Posterior vena cava (tissue), 2 donors: ENCODE measurements at regions of chr9 and their contacts with region 1.

Region 1: DNA sequence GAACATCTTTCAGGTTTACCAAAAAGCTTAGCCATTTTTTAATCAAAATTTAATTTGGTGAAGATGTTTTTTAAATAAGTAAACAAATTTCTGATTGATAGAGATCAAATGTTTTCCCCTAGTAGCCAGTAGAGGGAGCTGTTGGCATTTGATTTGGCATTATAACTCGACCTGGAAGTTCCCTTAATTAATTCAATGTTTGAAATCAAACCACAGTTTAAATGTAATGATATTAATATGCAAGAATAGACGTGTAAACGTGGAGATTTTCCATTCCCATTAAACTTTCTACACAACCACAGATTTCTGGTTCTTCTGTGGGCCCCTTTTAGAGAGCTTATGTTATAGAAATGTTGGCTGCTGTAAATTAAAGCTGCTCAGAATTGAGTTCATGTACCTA is 148.1 kb upstream of the MPDZ start:
- DNase-seq: no peak

Region 2: GRCh38 chr9:12274577-12274976 is 1153.0 kb before region 1 on chr9:
- intact Hi-C with region 1: no loop called
- DNase-seq: peak; percentile 70

Region 3: GRCh38 chr9:14353222-14354056 is 925.9 kb after region 1 on chr9:
- intact Hi-C with region 1: loop called in 1 of 2 experiments (anchors 5 kb)
- DNase-seq: peak; percentile 97

Region 4: GRCh38 chr9:14400658-14400995 is 973.0 kb after region 1 on chr9:
- intact Hi-C with region 1: loop called in 1 of 2 experiments (anchors 10 kb)
- DNase-seq: peak; percentile 81

Region 5: GRCh38 chr9:14428781-14429230 is 1001.2 kb after region 1 on chr9:
- intact Hi-C with region 1: loop called in 1 of 2 experiments (anchors 10 kb)
- DNase-seq: peak; percentile 89